SK-N-SH (cell line): ENCODE measurements at regions of chrX and their contacts with region 1.

Region 1: GRCh38 chrX:103175944-103176753 is 38.8 kb upstream of the BEX4 start:
- DNase-seq: peak; percentile 67
- H3K4me3 ChIP-seq: peak overlapping the region; percentile 15 to 27; a peak in 3 of 4 replicates
- H3K27ac ChIP-seq: no peak overlapping the region
- H3K4me1 ChIP-seq: no peaks in the 10 kb centered on the region
- H3K27me3 ChIP-seq: peaks cover 14% of the 10 kb centered on the region; the same call in 1 of the 2 replicates
- CTCF ChIP-seq: peak; percentile 92
- EP300 ChIP-seq: no peak
- RAD21 ChIP-seq: peak; percentile 77

Region 2: DNA sequence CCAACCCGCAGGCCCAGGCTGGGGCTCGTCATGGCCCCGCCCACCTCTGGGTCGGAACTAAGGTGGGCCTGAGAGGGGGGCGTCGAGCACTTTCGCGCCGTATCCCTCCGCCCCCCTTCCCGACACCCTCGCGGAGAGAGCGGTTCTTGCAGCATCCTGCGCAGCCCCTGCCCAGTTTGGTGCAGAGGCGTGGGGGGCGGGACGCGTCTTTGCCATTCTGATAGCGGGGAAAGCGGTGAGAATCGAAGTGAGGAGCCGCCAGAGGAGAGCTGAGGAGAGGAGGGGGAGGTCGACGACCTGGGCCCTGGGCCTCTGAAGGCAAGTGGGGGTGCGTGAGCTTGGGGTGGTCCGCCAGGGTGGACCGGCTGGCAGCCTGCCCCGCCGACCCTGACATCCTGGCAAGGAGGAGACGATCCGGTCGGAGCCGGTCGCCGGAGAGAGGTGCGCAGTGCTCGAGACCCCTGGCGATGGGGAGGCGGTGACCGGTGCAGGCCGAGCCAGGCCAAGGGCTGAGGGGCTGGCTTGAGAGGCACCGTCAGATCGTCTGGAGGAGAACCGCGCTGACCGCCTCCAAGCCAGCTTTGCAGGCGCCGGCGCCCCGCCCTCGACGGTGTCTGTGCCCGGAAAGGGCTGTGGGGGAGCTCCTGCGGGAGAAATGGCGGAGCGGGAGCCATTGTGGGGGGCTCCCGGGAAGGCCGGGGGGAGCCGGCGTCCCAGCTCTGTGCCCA is 430.1 kb before region 1 on chrX:
- CTCF ChIA-PET with region 1: no interaction called
- POLR2A ChIA-PET with region 1: interaction called, 10 read pairs
- DNase-seq: peak; percentile 75
- H3K4me3 ChIP-seq: peak overlapping the region; percentile 41 to 61
- H3K27ac ChIP-seq: peak overlapping the region in 1 of 2 experiments; percentile 58; a peak in 2 of 4 replicates
- H3K4me1 ChIP-seq: no peaks in the 10 kb centered on the region; a peak in 1 of 4 replicates
- H3K27me3 ChIP-seq: no peaks in the 10 kb centered on the region
- CTCF ChIP-seq: no peak
- EP300 ChIP-seq: no peak
- RAD21 ChIP-seq: no peak

Region 3: GRCh38 chrX:103017542-103017941 is 158.6 kb before region 1 on chrX:
- CTCF ChIA-PET with region 1: no interaction called
- POLR2A ChIA-PET with region 1: no interaction called
- DNase-seq: no peak
- H3K4me3 ChIP-seq: no peak overlapping the region
- H3K27ac ChIP-seq: no peak overlapping the region
- H3K4me1 ChIP-seq: no peaks in the 10 kb centered on the region
- H3K27me3 ChIP-seq: peaks cover 25% of the 10 kb centered on the region
- CTCF ChIP-seq: no peak; the same call in 1 of the 2 replicates
- EP300 ChIP-seq: no peak
- RAD21 ChIP-seq: no peak

Region 4: GRCh38 chrX:103063918-103064434 is 112.2 kb before region 1 on chrX and contains the start of gene BEX1:
- CTCF ChIA-PET with region 1: no interaction called
- POLR2A ChIA-PET with region 1: no interaction called
- DNase-seq: peak; percentile 86
- H3K4me3 ChIP-seq: peak within 1 kb of the TSS; percentile 58 to 59
- H3K27ac ChIP-seq: peak within 1 kb of the TSS; percentile 61 to 89
- H3K4me1 ChIP-seq: peaks cover 0 to 3% of the 10 kb centered on the region in 2 experiments; a peak in 1 of 4 replicates
- H3K27me3 ChIP-seq: no peaks in the 10 kb centered on the region; the same call in 1 of the 2 replicates
- CTCF ChIP-seq: no peak
- EP300 ChIP-seq: peak in 1 of 2 experiments; percentile 28; a peak in 1 of 4 replicates
- RAD21 ChIP-seq: no peak
- polyA plus RNA-seq, gene BEX1: 170 and 206 TPM in 2 replicates

Region 5: GRCh38 chrX:103187953-103188475 is 11.9 kb after region 1 on chrX:
- CTCF ChIA-PET with region 1: interaction called, 10 read pairs
- POLR2A ChIA-PET with region 1: no interaction called
- DNase-seq: no peak
- H3K4me3 ChIP-seq: no peak overlapping the region
- H3K27ac ChIP-seq: no peak overlapping the region
- H3K4me1 ChIP-seq: no peaks in the 10 kb centered on the region
- H3K27me3 ChIP-seq: peaks cover 16% of the 10 kb centered on the region; the same call in 1 of the 2 replicates
- CTCF ChIP-seq: no peak
- EP300 ChIP-seq: no peak
- RAD21 ChIP-seq: no peak